PC-9 (cell line): ENCODE measurements at regions of chr3 and their contacts with region 1.

Region 1: DNA sequence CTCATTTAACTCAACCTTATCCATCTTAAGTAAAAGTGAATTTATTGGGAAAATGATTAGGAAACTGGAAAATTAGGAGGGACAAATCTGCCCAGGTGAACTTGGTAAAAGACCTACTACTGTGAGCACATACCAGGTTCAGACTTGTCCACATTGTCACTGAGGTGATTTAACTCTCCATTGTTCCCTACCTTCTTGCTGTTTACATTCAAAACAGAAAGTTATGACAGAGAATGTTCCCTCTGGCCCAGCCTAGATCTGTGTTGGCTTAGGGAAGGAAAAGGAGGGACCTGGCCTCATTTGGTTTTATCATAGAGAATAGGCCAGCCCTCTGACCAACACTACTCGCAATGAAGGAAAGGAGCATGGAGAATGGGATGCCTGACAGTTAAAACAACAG is 117.6 kb downstream of the SATB1 start:
- DNase-seq: no peak
- H3K4me3 ChIP-seq: no peak overlapping the region
- H3K27ac ChIP-seq: no peak overlapping the region
- H3K4me1 ChIP-seq: 0 out of 2 replicates have a peak, but pooled peaks cover 3% of the 10 kb centered on the region
- H3K27me3 ChIP-seq: no peaks in the 10 kb centered on the region
- CTCF ChIP-seq: no peak

Region 2: DNA sequence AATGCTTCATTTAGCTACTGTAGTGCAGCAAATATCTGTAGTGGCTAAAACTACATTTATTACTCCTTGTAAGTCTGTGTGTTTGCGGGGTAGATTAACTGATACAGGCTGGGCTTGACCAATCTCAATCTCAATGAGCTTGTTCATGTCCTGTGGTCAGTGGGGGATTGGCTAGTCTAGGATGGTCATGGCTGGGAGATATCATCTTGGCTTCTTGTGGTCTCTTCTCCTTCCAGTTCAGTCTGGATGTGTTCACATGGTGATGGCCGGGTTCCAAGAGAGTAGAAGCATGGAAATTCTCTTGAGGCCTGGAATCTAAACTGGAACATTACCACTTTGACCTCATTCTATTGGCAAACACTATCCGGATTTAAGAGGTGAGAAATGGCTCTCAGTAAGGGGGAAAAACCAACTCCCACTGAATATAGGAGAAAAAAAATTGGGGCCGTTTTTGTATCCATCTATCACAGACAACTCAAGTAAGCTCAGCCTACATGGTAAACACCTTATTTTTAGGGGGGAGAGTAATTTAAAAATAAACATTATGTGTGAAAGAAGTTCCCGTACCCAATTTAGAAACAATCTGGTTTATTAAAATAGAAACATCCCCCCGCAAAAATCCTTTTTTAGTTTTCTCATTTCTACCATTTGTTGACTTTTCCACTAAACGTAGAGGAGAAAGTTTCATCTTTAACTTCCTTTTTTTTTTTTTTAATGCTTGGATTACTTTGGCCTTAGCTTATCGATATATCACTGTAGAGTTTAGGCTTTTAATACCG is 280.2 kb before region 1 on chr3:
- CTCF ChIA-PET with region 1: no interaction called
- POLR2A ChIA-PET with region 1: no interaction called
- intact Hi-C with region 1: no loop called
- DNase-seq: no peak
- H3K4me3 ChIP-seq: no peak overlapping the region
- H3K27ac ChIP-seq: no peak overlapping the region
- H3K4me1 ChIP-seq: no peaks in the 10 kb centered on the region
- H3K27me3 ChIP-seq: no peaks in the 10 kb centered on the region
- CTCF ChIP-seq: no peak

Region 3: GRCh38 chr3:18258492-18258891 is 49.0 kb before region 1 on chr3:
- CTCF ChIA-PET with region 1: no interaction called
- POLR2A ChIA-PET with region 1: no interaction called
- intact Hi-C with region 1: no loop called
- DNase-seq: no peak
- H3K4me3 ChIP-seq: no peak overlapping the region
- H3K27ac ChIP-seq: no peak overlapping the region
- H3K4me1 ChIP-seq: no peaks in the 10 kb centered on the region
- H3K27me3 ChIP-seq: no peaks in the 10 kb centered on the region
- CTCF ChIP-seq: no peak

Region 4: DNA sequence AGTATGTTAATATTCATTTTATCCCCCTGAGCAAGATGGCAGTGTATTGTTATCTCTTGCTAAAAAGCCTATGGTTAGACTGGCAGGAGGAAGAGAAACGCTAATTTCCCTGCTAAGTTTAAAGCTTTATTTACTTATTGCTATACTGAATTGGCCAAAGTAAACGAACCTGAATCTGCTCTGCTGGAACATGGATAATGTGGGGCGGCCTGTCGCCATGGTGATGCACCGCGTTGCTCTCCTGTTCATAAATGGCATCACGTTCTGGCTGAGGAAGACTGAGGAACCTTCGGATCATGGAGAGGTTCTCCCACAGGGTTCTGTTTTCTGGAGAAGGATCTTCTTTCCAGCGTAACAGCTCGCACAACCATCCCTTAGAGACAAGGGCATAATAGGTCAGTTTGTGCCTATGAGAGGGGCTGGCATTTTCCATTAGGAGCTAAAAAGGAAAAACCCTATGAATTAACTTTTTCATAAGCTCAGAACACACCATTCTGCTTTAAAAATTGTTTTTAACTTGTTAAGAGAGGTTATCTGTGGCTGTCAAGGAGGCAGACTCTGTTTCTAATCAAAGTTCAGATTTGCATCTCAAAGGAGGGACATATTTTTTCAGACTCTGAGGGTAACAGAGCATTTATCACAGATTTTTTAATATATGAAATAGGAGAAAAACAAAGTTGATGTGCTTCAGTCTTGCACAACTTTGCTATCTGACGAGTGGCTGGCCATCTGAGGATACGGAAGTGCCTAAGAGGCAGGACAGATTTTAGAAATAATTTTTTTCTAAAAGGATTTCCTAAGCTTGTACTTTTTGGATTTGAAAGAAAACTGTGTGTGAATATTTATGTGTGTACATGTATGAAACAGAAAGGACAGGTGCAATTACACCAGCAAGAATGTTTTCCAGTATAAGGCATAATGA is 44.6 kb after region 1 on chr3:
- CTCF ChIA-PET with region 1: no interaction called
- POLR2A ChIA-PET with region 1: interaction called, 12 read pairs
- intact Hi-C with region 1: no loop called
- DNase-seq: no peak
- H3K4me3 ChIP-seq: no peak overlapping the region
- H3K27ac ChIP-seq: no peak overlapping the region
- H3K4me1 ChIP-seq: no peaks in the 10 kb centered on the region
- H3K27me3 ChIP-seq: no peaks in the 10 kb centered on the region
- CTCF ChIP-seq: no peak

Region 5: GRCh38 chr3:18423401-18424212 is 116.1 kb after region 1 on chr3:
- CTCF ChIA-PET with region 1: no interaction called
- POLR2A ChIA-PET with region 1: no interaction called
- intact Hi-C with region 1: no loop called
- DNase-seq: peak in 1 of 2 experiments; percentile 39
- H3K4me3 ChIP-seq: peak overlapping the region; percentile 86
- H3K27ac ChIP-seq: 0 out of 2 replicates have a peak overlapping the region, but pooled peaks have one; percentile 8
- H3K4me1 ChIP-seq: peaks cover 26% of the 10 kb centered on the region
- H3K27me3 ChIP-seq: no peaks in the 10 kb centered on the region
- CTCF ChIP-seq: no peak